ENCODE measurements at regions of chr10 and their contacts with region 1.

Region 1: GRCh38 chr10:70115948-70116682 is 16.5 kb downstream of the AIFM2 start:
- DNase-seq: no peak
- H3K4me3 ChIP-seq: no peak overlapping the region
- H3K27ac ChIP-seq: no peak overlapping the region
- H3K27me3 ChIP-seq: no peaks in the 10 kb centered on the region
- CTCF ChIP-seq: peak; percentile 90

Region 2: DNA sequence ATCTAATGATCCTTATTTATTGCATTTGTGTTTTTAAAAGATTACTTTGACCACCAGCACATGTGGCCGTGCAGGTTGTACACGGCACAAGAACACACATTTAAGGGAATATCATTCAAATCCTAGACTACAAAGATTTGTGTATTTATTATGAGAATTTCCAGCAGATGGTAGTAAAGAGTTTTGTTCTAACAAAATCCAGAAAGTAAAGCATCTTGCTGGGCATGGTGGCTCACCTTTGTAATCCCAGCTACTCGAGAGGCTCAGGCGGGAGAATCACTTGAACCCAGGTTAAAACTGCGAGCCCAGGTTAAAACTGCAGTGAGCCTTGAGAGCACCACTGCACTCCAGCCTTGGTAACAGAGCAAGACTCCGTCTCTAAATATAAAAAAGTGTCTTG is 31.9 kb before region 1 on chr10:
- CTCF ChIA-PET with region 1: interaction called, 11 read pairs
- POLR2A ChIA-PET with region 1: no interaction called
- DNase-seq: no peak
- H3K4me3 ChIP-seq: no peak overlapping the region
- H3K27ac ChIP-seq: no peak overlapping the region
- H3K27me3 ChIP-seq: no peaks in the 10 kb centered on the region
- CTCF ChIP-seq: no peak

Region 3: GRCh38 chr10:70093335-70093944 is 22.7 kb before region 1 on chr10:
- CTCF ChIA-PET with region 1: interaction called, 55 read pairs
- POLR2A ChIA-PET with region 1: no interaction called
- DNase-seq: no peak
- H3K4me3 ChIP-seq: no peak overlapping the region
- H3K27ac ChIP-seq: no peak overlapping the region
- H3K27me3 ChIP-seq: no peaks in the 10 kb centered on the region
- CTCF ChIP-seq: no peak

Region 4: GRCh38 chr10:70130878-70131559 is 14.9 kb after region 1 on chr10:
- CTCF ChIA-PET with region 1: interaction called, 44 read pairs
- POLR2A ChIA-PET with region 1: no interaction called
- DNase-seq: no peak
- H3K4me3 ChIP-seq: 0 out of 2 replicates have a peak overlapping the region, but pooled peaks have one; percentile 1
- H3K27ac ChIP-seq: peak overlapping the region; percentile 52
- H3K27me3 ChIP-seq: no peaks in the 10 kb centered on the region
- CTCF ChIP-seq: no peak

Region 5: DNA sequence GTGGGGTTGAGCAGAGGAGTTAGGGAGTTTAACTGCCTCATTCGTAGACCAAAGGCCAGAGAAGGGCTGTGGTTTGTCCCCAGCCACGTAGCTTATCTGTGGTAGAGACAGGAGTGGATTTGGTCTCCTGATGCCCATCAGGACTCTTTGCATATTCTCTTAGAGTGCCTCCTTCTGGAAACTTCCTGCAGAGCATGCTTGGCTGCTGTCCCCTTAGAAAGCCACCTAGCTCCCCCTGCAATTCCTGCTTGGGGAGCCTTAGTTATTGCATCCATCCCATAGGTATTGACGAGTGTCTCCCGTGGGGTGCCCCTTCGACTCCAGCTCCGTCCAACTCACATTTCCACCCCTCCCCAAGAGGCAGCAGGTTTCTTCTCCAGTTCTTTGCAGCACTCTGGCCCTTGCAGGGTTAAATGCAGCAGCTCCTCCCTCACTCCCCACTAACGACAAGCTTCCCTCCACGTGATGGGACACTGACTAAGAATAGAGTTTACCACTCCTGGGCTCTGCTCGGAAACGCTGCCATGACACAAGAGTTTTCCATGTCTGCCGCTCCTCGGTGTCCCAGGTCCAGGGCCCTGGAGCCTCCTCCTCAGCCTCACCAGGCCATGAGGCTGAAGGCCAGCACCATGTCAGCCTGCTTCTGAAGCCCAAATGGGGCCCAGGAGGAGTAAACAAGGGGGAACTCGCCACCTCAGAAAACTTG is 948.5 kb after region 1 on chr10:
- CTCF ChIA-PET with region 1: no interaction called
- POLR2A ChIA-PET with region 1: no interaction called
- DNase-seq: no peak
- H3K4me3 ChIP-seq: no peak overlapping the region
- H3K27ac ChIP-seq: no peak overlapping the region
- H3K27me3 ChIP-seq: peaks cover 28% of the 10 kb centered on the region
- CTCF ChIP-seq: peak; percentile 12; the same call in 1 of the 2 replicates

Measured in AG04450 (cell line).